Endothelial cell of umbilical vein (primary cell): ENCODE measurements at regions of chr19 and their contacts with region 1.

Region 1: DNA sequence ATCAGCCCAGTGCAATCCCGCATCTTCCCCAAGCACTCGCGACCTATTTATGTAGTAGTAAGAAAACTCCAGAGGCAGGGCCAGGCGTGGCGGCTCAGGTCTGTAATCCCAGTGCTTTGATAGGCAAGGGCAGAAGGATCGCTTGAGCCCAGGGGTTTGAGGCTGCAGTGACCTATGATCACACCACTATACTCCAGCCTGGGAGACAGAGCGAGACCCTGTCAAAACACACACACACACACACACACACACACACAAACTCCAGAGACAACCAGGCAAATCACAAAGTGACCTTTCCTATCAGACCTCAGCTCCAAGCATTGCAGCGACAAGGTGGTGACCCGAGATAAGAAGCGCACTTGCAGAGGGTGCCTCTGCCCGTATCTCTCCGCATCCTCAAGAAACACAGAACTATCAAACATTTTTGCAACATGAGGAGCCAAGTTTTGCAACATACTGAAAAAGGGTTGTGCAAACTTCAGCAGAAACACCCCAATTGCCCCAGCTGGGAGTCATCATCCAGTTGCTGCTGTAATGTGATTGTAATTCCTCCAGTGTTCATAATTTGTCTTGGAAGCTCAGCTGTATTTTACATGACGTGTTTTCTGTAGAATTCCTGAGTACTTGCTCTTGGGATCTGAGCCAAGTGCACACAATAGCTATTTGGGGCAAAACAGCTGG is 8.7 kb upstream of the KLF2 start:
- DNase-seq: no peak
- H3K4me3 ChIP-seq: peak overlapping the region in 1 of 3 experiments; percentile 1
- H3K27ac ChIP-seq: peak overlapping the region; percentile 88
- H3K4me1 ChIP-seq: peaks cover 20% of the 10 kb centered on the region
- H3K27me3 ChIP-seq: no peaks in the 10 kb centered on the region
- CTCF ChIP-seq: no peak
- POLR2A ChIP-seq: no peak

Region 2: GRCh38 chr19:15934332-15935174 is 381.4 kb before region 1 on chr19 and contains the start of gene CYP4F11:
- CTCF ChIA-PET with region 1: no interaction called
- POLR2A ChIA-PET with region 1: no interaction called
- dilution Hi-C with region 1: no loop called
- intact Hi-C with region 1: no loop called
- DNase-seq: no peak
- H3K4me3 ChIP-seq: no peak within 1 kb of the TSS
- H3K27ac ChIP-seq: no peak within 1 kb of the TSS
- H3K4me1 ChIP-seq: no peaks in the 10 kb centered on the region
- H3K27me3 ChIP-seq: peaks cover 0 to 6% of the 10 kb centered on the region in 2 experiments
- CTCF ChIP-seq: no peak
- POLR2A ChIP-seq: no peak
- total RNA-seq, gene CYP4F11: not detected in 2 replicates

Region 3: DNA sequence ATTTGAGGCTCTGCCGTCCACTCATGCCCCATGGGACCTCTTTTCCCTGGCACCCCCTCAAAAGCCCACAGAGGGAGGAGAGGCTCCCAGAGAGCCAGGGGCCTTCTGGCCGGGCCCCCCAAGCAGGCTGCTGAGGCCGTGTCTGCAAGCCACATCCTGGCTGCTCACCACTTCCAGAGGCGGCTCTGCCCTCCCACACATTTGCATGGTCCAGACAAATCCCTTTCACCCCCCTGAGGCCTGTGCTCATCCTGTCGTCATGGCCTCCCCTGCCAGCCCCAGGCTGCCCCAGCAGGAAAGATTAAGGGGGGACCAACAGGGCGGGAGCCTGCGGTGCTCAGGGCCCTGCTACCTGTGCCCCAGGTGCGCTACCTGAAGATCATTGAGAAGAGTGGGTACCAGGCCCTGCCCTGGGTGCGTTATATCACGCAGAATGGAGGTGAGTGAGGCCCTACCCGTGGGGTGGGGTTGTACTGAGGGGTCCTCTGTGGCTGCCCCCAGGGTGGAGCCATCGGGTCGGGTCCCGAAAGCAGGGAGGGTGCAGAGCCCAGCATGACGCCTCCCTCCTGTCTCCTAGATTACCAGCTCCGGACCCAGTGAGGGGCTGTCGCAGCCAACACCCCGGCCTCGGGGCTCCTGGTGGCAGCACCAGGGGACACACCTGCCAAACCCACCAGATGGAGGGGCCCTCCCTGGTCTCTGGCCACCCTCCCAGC is 82.0 kb before region 1 on chr19:
- CTCF ChIA-PET with region 1: no interaction called
- POLR2A ChIA-PET with region 1: no interaction called
- dilution Hi-C with region 1: no loop called
- intact Hi-C with region 1: no loop called
- DNase-seq: no peak
- H3K4me3 ChIP-seq: no peak overlapping the region
- H3K27ac ChIP-seq: no peak overlapping the region
- H3K4me1 ChIP-seq: no peaks in the 10 kb centered on the region
- H3K27me3 ChIP-seq: no peaks in the 10 kb centered on the region
- CTCF ChIP-seq: no peak
- POLR2A ChIP-seq: no peak

Region 4: GRCh38 chr19:16247353-16248182 is 68.4 kb before region 1 on chr19:
- CTCF ChIA-PET with region 1: interaction called, 14 read pairs
- POLR2A ChIA-PET with region 1: no interaction called
- dilution Hi-C with region 1: no loop called
- intact Hi-C with region 1: no loop called
- DNase-seq: peak; percentile 78
- H3K4me3 ChIP-seq: no peak overlapping the region
- H3K27ac ChIP-seq: no peak overlapping the region
- H3K4me1 ChIP-seq: no peaks in the 10 kb centered on the region
- H3K27me3 ChIP-seq: no peaks in the 10 kb centered on the region
- CTCF ChIP-seq: peak; percentile 94 to 95
- POLR2A ChIP-seq: no peak

Region 5: GRCh38 chr19:16283210-16284061 is 32.5 kb before region 1 on chr19:
- CTCF ChIA-PET with region 1: interaction called, 3 read pairs
- POLR2A ChIA-PET with region 1: interaction called, 17 read pairs
- dilution Hi-C with region 1: no loop called
- intact Hi-C with region 1: loop called (anchors 1 kb)
- DNase-seq: peak; percentile 97
- H3K4me3 ChIP-seq: peak overlapping the region in 1 of 3 experiments; percentile 2
- H3K27ac ChIP-seq: peak overlapping the region; percentile 97
- H3K4me1 ChIP-seq: peaks cover 28% of the 10 kb centered on the region
- H3K27me3 ChIP-seq: no peaks in the 10 kb centered on the region
- CTCF ChIP-seq: no peak
- POLR2A ChIP-seq: peak; percentile 94

Region 6: DNA sequence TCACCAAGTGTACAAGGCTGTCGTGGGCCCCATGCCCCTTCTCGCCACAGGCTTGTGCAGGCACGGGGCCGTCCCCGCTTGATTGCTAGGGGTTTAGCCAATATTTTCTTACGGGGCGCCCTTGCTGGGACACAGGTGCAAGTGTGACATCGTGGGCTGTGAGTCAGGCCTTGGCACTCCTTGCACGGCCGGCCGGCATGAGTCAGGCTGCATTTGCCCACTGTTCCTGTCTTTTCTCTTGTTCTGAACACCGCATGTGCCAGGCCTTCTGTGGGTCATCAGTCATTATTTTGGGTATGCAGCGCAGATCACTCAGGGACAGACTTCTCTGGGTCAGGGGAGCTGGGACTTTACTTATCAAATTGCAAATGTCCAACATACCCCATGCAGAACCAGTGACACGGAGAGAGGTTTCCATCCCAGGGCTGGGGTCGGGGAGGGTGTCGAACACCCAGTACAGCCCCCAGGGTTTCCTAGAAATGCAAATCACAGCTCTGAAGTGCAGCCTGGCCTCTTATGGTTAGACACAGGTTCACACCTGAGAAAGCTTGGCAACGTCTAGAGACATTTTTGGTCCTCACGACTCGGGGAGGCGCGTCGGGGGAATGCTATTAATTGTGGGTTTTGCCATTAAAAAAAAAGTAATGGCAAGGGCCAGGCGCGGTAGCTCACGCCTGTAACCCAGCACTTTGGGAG is 13.8 kb before region 1 on chr19:
- CTCF ChIA-PET with region 1: interaction called, 14 read pairs
- POLR2A ChIA-PET with region 1: interaction called, 7 read pairs
- dilution Hi-C with region 1: no loop called
- intact Hi-C with region 1: no loop called
- DNase-seq: peak; percentile 70
- H3K4me3 ChIP-seq: no peak overlapping the region
- H3K27ac ChIP-seq: no peak overlapping the region
- H3K4me1 ChIP-seq: peaks cover 9% of the 10 kb centered on the region
- H3K27me3 ChIP-seq: no peaks in the 10 kb centered on the region
- CTCF ChIP-seq: no peak
- POLR2A ChIP-seq: no peak

Region 7: DNA sequence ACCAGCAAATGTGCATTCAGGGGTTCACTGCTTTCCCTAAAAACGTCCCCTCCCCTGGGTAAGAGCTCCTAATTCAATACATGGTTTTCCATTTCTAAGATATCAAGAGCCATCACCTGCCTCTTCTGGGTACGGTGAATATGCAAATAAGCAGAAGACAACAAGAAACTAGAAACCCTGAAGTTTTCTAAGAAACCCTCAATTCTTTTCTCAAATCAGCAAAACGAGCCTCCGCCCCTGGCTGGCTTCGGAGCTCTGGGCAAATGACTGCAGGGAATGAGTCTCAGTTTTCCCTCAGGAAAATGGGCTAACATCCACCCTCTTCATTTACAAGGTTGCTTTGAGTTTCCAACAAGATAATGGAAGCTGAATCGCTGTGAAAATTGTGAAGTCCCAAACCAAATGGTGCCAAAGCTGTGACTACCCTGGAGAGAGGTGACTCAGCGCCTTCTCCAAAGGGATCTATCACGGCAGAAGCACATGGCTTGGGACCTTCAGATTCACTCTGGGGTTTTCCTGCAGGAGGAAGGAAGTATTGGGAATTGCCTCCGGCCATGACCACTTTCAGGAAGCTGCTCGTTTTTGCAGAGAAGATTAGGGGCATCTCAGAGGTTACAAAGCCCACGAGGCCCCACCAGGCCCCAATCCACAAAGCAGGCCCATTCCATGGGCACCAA is 35.3 kb after region 1 on chr19:
- CTCF ChIA-PET with region 1: no interaction called
- POLR2A ChIA-PET with region 1: no interaction called
- dilution Hi-C with region 1: no loop called
- intact Hi-C with region 1: loop called (anchors 1 kb)
- DNase-seq: peak; percentile 77
- H3K4me3 ChIP-seq: no peak overlapping the region
- H3K27ac ChIP-seq: peak overlapping the region; percentile 51
- H3K4me1 ChIP-seq: peaks cover 32% of the 10 kb centered on the region
- H3K27me3 ChIP-seq: no peaks in the 10 kb centered on the region
- CTCF ChIP-seq: no peak
- POLR2A ChIP-seq: no peak

Region 8: GRCh38 chr19:16435238-16435917 is 119.4 kb after region 1 on chr19:
- CTCF ChIA-PET with region 1: no interaction called
- POLR2A ChIA-PET with region 1: no interaction called
- dilution Hi-C with region 1: no loop called
- intact Hi-C with region 1: no loop called
- DNase-seq: peak; percentile 84
- H3K4me3 ChIP-seq: no peak overlapping the region
- H3K27ac ChIP-seq: peak overlapping the region; percentile 72
- H3K4me1 ChIP-seq: peaks cover 27% of the 10 kb centered on the region
- H3K27me3 ChIP-seq: no peaks in the 10 kb centered on the region
- CTCF ChIP-seq: no peak
- POLR2A ChIP-seq: no peak